Activated CD4-positive, alpha-beta memory T cell treated with anti-CD3 and anti-CD28 coated beads, Interleukin-2, amount 10 ng/mL, durations not matched to agents 7 days and 5 days (primary cell): ENCODE measurements at regions of chr12 and their contacts with region 1.

Region 1: DNA sequence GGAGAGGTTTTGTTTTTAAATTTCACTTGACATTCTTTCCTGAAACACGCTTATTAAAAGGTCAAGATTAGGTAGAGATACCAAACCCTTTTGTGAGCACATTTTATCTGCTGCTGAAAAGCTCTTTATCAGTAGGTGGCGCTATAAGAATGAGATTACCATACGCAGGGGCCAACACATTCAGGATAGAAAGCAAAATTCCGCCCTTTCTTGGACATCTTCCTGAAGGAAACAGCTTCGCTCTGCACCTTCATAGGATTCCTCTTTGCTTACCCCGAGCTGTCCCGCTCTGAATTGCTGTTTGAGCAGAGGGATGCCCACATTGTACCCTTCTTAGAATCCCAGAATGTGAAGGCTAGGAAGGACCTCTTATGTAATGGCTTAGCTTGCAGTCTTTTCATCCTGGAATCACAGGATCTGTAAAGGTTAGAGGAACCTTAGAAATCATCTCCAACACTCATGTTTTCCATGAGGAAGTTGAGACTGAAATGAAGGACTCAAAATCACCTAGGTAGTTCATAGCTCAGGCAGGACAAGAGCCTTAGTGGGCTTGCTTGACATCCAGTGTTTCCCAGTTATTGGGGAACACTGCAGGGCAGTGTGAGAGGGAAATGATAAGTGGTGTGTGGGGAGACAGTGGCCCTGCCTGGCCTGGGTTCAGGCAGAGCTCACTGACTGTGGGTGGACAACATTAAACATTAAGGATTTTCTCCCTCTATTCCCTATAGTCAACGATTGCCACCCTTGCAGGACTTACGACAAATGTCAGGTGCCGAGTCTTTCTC is 38.7 kb upstream of the CRY1 start:
- DNase-seq: peak; percentile 17
- H3K4me3 Mint-ChIP-seq: no peak overlapping the region
- H3K27ac Mint-ChIP-seq: no peak overlapping the region
- H3K4me1 Mint-ChIP-seq: no peaks in the 10 kb centered on the region
- H3K27me3 Mint-ChIP-seq: no peaks in the 10 kb centered on the region

Region 2: GRCh38 chr12:107145397-107145796 is 13.4 kb after region 1 on chr12:
- CTCF ChIA-PET with region 1: interaction called, 13 read pairs
- POLR2A ChIA-PET with region 1: no interaction called
- DNase-seq: no peak
- H3K4me3 Mint-ChIP-seq: no peak overlapping the region
- H3K27ac Mint-ChIP-seq: no peak overlapping the region
- H3K4me1 Mint-ChIP-seq: no peaks in the 10 kb centered on the region
- H3K27me3 Mint-ChIP-seq: peaks cover 2% of the 10 kb centered on the region

Region 3: DNA sequence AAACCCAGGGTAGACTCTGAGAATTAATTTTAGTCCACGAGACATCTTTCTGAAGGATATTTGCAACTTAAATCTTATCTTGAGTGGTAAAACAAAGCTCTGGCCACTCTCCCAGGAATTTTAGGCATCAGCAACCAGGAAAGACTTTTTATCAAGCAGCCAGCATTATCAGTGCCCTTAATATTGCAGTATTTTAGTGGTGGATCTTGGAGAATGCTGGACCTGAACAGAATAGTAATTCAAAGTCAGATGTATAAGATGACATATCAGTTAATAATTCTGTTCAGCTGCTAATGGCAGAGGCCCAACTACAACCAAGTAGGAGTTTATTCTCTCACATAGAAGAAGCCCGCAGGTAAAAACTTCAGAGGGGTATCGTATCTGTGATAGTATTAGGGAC is 20.3 kb after region 1 on chr12:
- CTCF ChIA-PET with region 1: interaction called, 12 read pairs
- POLR2A ChIA-PET with region 1: no interaction called
- DNase-seq: no peak
- H3K4me3 Mint-ChIP-seq: no peak overlapping the region
- H3K27ac Mint-ChIP-seq: no peak overlapping the region
- H3K4me1 Mint-ChIP-seq: no peaks in the 10 kb centered on the region
- H3K27me3 Mint-ChIP-seq: peaks cover 14% of the 10 kb centered on the region

Region 4: DNA sequence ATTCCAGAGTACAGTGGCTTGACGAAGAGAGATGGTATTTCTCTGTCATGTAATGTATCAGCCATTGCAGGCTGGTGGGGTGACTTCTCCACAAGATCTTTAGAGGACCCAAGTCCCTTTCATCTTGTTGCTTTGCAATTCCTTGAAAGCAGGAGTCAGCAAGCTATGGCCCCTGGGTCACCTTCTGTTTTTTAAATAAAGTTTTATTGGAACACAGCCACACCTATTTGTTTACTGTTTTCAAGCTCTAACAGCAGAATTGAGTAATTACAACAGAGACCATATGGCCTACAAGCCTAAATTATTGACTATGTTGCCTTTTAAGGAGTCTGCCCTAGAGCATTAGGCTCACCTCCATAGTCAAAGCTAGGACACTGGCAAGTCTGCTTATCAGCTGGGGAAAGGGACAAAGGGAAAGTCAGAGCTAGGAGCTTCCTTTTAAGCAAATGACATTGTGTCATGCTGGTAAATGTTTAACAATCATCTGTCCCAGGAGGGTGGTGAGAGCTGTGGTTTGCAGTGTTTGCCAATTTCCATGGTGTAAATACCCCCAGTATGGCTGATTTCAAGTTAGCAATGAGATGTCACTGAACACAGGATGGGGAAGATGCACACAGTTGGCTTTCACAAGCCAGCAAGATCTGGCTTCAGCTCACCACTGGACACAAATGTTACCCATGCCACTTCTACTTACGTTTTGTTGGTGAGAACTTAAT is 465.8 kb after region 1 on chr12:
- CTCF ChIA-PET with region 1: interaction called, 10 read pairs
- POLR2A ChIA-PET with region 1: no interaction called
- DNase-seq: no peak
- H3K4me3 Mint-ChIP-seq: no peak overlapping the region
- H3K27ac Mint-ChIP-seq: no peak overlapping the region
- H3K4me1 Mint-ChIP-seq: no peaks in the 10 kb centered on the region
- H3K27me3 Mint-ChIP-seq: no peaks in the 10 kb centered on the region

Region 5: DNA sequence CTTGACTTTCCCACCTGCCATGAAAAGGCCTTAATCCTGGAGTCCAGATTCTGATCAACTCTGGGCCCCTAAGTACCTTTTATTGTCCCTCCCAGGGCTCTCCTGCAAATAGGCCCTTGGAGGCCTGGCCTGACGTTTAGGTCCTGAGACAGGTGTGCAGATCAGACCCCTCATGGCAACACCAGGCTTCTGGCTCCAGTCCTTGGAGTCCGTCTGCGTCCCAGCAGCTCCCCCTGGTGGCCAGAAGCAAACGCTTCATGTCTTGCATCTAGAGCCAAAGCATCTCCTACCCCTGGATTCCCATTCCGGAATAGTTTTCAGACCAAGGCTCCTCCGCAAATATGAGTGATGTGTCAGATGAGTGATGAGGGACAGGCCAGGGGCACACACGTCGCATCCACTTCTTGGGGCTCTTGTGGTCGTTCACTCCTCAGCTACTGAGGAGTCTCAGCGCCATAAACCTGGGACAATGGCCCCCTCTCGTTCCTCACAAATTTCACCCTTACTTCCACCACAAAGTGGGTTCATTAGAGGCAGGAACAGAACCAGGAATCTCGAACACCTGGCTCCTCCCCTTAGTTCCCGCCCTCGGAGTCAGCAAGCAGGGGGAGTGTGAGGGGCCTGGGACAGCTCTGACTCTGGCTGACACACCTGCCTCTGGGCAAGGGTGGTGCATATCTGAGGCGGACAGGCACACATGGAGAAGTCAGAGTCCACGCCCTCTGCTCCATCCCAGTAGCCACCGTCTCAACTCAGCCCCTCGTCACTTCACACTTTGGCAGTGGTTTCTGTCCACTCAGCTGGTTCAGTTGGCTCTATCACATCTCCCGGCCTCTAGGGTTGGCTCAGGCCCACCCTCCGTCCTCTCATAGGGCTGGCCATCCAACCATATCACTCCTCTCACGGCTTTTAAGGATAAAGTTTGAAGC is 475.7 kb after region 1 on chr12:
- CTCF ChIA-PET with region 1: interaction called, 172 read pairs
- POLR2A ChIA-PET with region 1: interaction called, 3 read pairs
- DNase-seq: peak; percentile 79
- H3K4me3 Mint-ChIP-seq: no peak overlapping the region
- H3K27ac Mint-ChIP-seq: no peak overlapping the region
- H3K4me1 Mint-ChIP-seq: no peaks in the 10 kb centered on the region
- H3K27me3 Mint-ChIP-seq: no peaks in the 10 kb centered on the region